CD4-positive, alpha-beta T cell (primary cell): ENCODE measurements at regions of chr3 and their contacts with region 1.

Region 1: GRCh38 chr3:186930641-186931531 is 560 bp downstream of the ST6GAL1 start:
- DNase-seq: peak; percentile 47 to 88 (median 62)
- ATAC-seq: peak; percentile 76
- H3K4me3 ChIP-seq: peak overlapping the region; percentile 97
- H3K4me3 Mint-ChIP-seq: peak overlapping the region; percentile 100
- H3K27ac ChIP-seq: peak overlapping the region; percentile 68 to 87
- H3K27ac Mint-ChIP-seq: peak overlapping the region; percentile 94
- H3K4me1 ChIP-seq: peaks cover 34% of the 10 kb centered on the region
- H3K4me1 Mint-ChIP-seq: peaks cover 43% of the 10 kb centered on the region
- H3K27me3 ChIP-seq: no peaks in the 10 kb centered on the region
- H3K27me3 Mint-ChIP-seq: no peaks in the 10 kb centered on the region
- CTCF ChIP-seq: peak; percentile 48

Region 2: DNA sequence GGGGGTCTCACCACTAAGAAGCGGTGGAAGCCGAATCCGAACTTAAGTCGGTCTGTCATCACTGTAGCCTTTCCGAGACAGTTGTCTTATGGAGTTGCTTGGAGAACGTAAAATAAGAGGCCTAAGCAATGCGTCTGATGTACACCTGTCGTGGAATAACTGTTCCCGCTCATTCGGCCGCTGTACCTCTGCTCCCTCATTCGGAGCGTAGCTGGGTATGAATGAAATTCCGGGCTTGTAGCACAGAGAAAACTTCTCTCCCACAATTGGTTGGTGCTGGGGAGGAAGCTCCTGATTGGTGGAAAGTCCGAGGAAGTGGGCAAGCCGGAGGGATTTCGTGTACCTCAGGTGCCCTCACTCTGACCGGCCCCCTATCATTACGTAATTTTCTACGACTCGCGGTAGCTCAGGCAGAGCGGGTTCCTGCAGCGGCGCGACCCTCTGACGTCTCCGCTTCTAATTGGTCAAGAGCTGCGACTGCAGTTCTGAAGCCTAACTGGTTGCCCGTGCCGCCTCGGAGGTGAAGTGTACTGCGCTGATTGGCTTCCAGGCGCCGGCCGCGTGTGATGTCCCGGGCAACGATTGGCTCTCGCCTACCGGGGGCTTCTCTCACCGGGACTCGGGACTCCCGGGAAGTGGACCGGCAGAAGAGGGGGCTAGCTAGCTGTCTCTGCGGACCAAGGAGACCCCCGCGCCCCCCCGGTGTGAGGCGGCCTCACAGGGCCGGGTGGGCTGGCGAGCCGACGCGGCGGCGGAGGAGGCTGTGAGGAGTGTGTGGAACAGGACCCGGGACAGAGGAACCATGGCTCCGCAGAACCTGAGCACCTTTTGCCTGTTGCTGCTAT is 360.6 kb before region 1 on chr3 and contains the start of gene DNAJB11:
- CTCF ChIA-PET with region 1: no interaction called
- POLR2A ChIA-PET with region 1: no interaction called
- intact Hi-C with region 1: loop called in 1 of 2 experiments (anchors 10 kb)
- DNase-seq: peak; percentile 91 to 100 (median 97)
- ATAC-seq: peak; percentile 83
- H3K4me3 ChIP-seq: peak within 1 kb of the TSS; percentile 79
- H3K4me3 Mint-ChIP-seq: peak within 1 kb of the TSS; percentile 99
- H3K27ac ChIP-seq: peak within 1 kb of the TSS; percentile 90 to 94
- H3K27ac Mint-ChIP-seq: peak within 1 kb of the TSS; percentile 94
- H3K4me1 ChIP-seq: peaks cover 37% of the 10 kb centered on the region
- H3K4me1 Mint-ChIP-seq: peaks cover 69% of the 10 kb centered on the region
- H3K27me3 ChIP-seq: no peaks in the 10 kb centered on the region
- H3K27me3 Mint-ChIP-seq: no peaks in the 10 kb centered on the region
- CTCF ChIP-seq: no peak
- total RNA-seq, gene DNAJB11: 69.3 to 70.3 TPM

Region 3: GRCh38 chr3:186875708-186876107 is 55.2 kb before region 1 on chr3:
- CTCF ChIA-PET with region 1: interaction called, 3 read pairs
- POLR2A ChIA-PET with region 1: interaction called, 6 read pairs
- intact Hi-C with region 1: loop called in 1 of 2 experiments (anchors 5 kb)
- DNase-seq: no peak
- ATAC-seq: no peak
- H3K4me3 ChIP-seq: no peak overlapping the region
- H3K4me3 Mint-ChIP-seq: no peak overlapping the region
- H3K27ac ChIP-seq: no peak overlapping the region
- H3K27ac Mint-ChIP-seq: no peak overlapping the region
- H3K4me1 ChIP-seq: peaks cover 12% of the 10 kb centered on the region
- H3K4me1 Mint-ChIP-seq: peaks cover 32% of the 10 kb centered on the region
- H3K27me3 ChIP-seq: no peaks in the 10 kb centered on the region
- H3K27me3 Mint-ChIP-seq: no peaks in the 10 kb centered on the region
- CTCF ChIP-seq: no peak

Region 4: DNA sequence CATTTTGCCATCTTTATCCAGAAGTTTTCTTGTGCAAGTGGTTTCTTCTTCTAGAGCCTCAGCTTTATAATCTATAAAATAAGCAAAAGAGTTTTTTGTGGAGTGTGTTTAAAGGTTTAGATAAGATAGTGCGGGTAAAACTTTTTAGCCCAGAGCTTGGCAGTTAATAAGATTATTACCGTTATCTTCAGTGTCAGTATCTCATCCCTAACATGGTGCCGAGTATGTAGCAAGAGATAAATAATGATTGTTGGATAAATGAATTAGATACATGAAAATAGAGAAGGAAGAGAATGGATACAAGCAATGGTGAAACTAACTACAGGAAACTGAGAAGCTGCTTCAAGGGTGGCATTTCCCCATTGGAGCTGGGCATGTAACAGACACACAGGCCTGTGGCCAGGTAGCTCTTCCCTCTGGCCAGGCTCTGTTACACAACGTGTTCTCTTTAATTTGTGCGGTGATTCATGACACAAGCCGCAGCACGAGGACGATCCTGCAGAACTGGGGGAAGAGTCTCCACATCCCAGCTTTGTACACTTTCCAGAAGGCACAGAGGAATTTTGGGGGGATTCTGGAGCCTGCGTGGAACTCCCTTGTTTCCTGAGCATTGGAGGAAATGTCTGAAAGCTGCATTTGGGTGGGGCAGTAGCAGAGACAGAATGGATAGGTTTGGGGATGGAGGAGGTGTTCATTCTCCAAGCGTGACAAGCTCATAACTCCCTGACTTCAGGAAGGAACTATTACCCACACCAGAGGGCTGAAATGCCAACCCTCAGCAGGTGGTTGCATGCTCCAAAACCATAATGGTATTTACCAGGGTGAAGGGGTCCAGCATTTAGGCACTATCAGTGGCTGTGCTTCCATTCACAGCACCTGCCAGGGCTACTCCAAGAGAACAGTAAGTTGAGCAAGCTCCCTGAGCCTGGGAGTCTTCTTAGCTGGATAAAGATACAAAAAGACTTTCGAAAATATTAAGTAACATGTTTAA is 14.8 kb before region 1 on chr3:
- CTCF ChIA-PET with region 1: interaction called, 6 read pairs
- POLR2A ChIA-PET with region 1: interaction called, 36 read pairs
- intact Hi-C with region 1: loop called in 1 of 2 experiments (anchors 1 kb)
- DNase-seq: peak in 3 of 14 experiments; percentile 23 to 44 (median 31)
- ATAC-seq: peak; percentile 39
- H3K4me3 ChIP-seq: no peak overlapping the region
- H3K4me3 Mint-ChIP-seq: no peak overlapping the region
- H3K27ac ChIP-seq: no peak overlapping the region
- H3K27ac Mint-ChIP-seq: no peak overlapping the region
- H3K4me1 ChIP-seq: peaks cover 19% of the 10 kb centered on the region
- H3K4me1 Mint-ChIP-seq: peaks cover 43% of the 10 kb centered on the region
- H3K27me3 ChIP-seq: no peaks in the 10 kb centered on the region
- H3K27me3 Mint-ChIP-seq: no peaks in the 10 kb centered on the region
- CTCF ChIP-seq: no peak

Region 5: DNA sequence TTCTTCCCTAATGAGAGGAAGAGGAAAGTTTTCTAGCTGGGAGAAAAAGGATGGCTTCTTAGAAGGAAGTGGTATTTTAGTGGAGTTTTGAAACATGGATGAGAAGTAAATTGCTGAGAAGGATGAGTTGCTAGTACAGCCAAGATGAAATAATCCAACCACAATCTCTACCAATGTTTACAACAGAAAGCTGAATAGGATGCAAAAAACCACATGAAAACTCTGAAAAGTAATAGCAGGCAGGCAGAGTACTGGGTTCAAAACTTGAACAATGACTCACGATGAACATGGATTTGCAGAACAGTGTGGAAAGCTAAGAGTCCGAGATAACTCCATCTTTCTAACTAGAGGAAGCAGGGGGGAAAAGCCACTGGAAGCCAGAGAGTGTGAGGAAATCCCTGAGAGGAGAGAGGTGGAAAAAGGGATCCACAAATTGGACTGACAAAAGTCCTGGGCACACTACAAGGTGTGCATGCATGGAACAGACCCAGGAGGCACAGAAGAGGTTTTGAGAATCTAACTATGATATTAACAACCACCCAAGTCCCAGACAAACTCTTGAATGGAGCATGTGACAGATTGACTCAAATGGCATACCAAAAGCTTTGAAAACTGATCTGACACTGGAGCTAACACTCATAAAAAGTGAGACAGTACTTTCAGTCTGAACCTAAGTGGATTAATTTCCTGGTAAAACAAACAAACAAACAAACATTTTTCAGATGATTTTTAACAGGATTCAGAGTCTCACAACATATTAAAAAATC is 76.2 kb after region 1 on chr3:
- CTCF ChIA-PET with region 1: interaction called, 3 read pairs
- POLR2A ChIA-PET with region 1: interaction called, 3 read pairs
- intact Hi-C with region 1: loop called in 1 of 2 experiments (anchors 5 kb)
- DNase-seq: peak in 2 of 14 experiments; percentile 40 to 67
- ATAC-seq: peak; percentile 74
- H3K4me3 ChIP-seq: no peak overlapping the region
- H3K4me3 Mint-ChIP-seq: peak overlapping the region; percentile 8
- H3K27ac ChIP-seq: peak overlapping the region in 1 of 2 donors; percentile 45
- H3K27ac Mint-ChIP-seq: peak overlapping the region; percentile 72
- H3K4me1 ChIP-seq: peaks cover 42% of the 10 kb centered on the region
- H3K4me1 Mint-ChIP-seq: peaks cover 65% of the 10 kb centered on the region
- H3K27me3 ChIP-seq: no peaks in the 10 kb centered on the region
- H3K27me3 Mint-ChIP-seq: no peaks in the 10 kb centered on the region
- CTCF ChIP-seq: no peak

Region 6: GRCh38 chr3:187066228-187066995 is 135.5 kb after region 1 on chr3:
- CTCF ChIA-PET with region 1: interaction called, 5 read pairs
- POLR2A ChIA-PET with region 1: interaction called, 5 read pairs
- intact Hi-C with region 1: loop called (anchors 2 to 5 kb)
- DNase-seq: peak in 13 of 14 experiments; percentile 31 to 78 (median 45)
- ATAC-seq: peak; percentile 91
- H3K4me3 ChIP-seq: no peak overlapping the region
- H3K4me3 Mint-ChIP-seq: peak overlapping the region; percentile 12
- H3K27ac ChIP-seq: no peak overlapping the region
- H3K27ac Mint-ChIP-seq: peak overlapping the region; percentile 86
- H3K4me1 ChIP-seq: peaks cover 45% of the 10 kb centered on the region
- H3K4me1 Mint-ChIP-seq: peaks cover 74% of the 10 kb centered on the region
- H3K27me3 ChIP-seq: no peaks in the 10 kb centered on the region
- H3K27me3 Mint-ChIP-seq: no peaks in the 10 kb centered on the region
- CTCF ChIP-seq: peak; percentile 38